GM18951 (cell line): ENCODE measurements at regions of chr2 and their contacts with region 1.

Region 1: GRCh38 chr2:112454586-112454985 is 21.1 kb upstream of the RGPD8 start:
- POLR2A ChIP-seq: no peak

Region 2: DNA sequence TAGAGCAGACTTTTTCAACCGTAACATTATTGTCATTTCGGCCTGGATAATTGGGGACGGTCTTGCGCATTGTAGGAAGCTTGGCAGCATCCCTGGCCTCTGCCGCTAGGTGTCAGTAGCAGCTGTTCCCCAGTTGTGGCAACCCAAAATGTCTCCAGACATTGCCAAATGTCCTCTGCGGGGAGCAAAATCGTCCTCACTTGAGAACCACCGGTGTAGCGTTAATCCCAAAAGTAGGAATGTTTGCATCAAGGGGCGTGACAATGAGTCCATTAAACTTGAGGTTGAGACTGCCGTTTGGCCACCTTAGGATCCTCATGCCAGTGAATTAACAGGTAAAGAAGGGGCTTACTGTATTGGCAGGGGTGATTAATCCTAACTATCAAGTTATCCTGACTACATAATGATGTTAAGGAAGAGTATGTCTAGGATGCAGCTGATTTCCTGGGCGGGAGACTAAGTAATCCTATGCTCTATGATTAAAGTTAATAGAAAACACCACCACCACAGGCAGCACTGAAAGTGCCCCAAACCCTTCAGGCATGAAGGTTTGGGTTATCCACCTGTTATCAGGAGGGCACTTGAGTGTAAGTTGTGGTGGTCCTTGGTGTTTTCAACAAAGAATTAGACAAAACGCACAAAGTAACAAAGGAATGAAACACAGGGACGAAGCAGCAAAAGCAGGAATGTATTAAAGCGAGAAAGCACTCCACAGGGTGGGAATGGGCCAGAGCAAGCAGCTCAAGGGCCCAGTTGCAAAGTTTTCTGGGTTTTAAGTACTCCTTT is 194.9 kb before region 1 on chr2:
- in situ Hi-C with region 1: loop called (anchors 10 kb)
- POLR2A ChIP-seq: no peak

Region 3: DNA sequence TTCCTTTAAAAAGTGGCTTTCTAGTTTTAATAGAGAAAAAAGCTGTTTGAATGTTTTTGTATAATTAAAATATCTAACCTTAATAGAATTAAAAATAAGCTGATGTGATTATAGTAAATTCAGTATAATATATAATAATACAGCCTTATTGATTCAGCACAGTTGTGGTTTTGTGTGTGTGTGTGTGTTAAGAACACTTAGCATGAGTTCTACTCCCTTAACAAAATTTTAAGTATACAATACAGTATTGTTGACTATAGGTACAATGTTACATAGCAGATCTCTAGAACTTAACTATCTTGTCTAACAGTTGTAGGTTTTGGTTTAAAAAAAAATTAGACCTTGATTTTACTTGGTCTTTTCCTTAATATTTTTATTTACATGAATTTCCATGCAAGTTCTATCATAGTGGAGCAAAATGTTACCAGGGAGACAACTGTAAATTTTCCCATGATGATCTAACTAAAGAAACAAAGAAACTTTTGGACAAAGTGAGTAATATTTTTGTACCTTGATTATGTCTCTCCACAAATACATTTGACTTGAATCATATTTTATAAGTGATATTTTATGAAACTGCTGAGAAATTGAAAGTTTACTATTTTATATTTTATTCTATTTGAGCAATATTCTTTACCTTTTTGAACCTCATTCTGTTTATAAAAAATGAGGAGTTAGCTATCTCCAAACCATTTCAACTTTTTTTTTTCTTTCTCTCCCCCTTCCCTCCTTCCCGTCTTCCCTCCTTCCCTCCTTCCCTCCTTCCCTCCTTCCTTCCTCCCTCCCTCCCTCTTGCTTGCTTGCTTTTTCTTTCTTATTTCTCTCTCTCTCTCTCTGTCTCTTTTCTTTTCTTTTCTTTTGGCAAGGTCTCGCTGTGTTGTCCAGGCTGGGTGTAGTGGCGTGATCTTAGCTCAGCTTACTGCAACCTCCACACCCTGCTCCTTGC is 132.9 kb before region 1 on chr2:
- in situ Hi-C with region 1: no loop called
- POLR2A ChIP-seq: no peak

Region 4: GRCh38 chr2:112339986-112340385 is 114.6 kb before region 1 on chr2:
- in situ Hi-C with region 1: loop called (anchors 10 kb)
- POLR2A ChIP-seq: no peak